Panc1 (cell line): ENCODE measurements at regions of chr1 and their contacts with region 1.

Region 1: GRCh38 chr1:40040511-40041465 is at the start of gene CAP1:
- DNase-seq: peak; percentile 89
- ATAC-seq: peak; percentile 97
- H3K4me3 ChIP-seq: peak within 1 kb of the TSS; percentile 96 to 100
- H3K27ac ChIP-seq: peak within 1 kb of the TSS; percentile 98
- H3K4me1 ChIP-seq: peaks cover 20% of the 10 kb centered on the region
- H3K27me3 ChIP-seq: no peaks in the 10 kb centered on the region
- CTCF ChIP-seq: no peak
- total RNA-seq, gene CAP1: 463 TPM

Region 2: DNA sequence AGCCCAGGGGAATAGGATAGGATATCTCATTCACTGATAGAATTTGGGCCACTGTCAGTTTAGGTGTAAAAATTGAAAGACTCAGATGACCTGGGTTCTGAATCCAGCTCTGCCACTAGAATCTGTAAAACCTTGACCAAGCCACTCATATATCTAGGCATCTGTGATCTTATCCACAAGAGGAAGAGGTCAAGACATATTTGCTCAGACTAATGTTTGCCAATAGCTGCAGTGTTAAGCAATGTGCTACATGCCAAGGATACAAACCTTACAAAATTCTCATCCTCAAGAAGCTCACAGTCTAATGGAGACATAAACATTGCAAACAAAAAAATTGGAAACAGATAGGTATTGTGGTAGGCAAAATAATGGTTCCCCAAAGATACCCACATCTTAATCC is 1398.4 kb before region 1 on chr1:
- CTCF ChIA-PET with region 1: no interaction called
- POLR2A ChIA-PET with region 1: interaction called, 13 read pairs
- in situ Hi-C with region 1: no loop called
- intact Hi-C with region 1: no loop called
- DNase-seq: no peak
- ATAC-seq: no peak
- H3K4me3 ChIP-seq: no peak overlapping the region
- H3K27ac ChIP-seq: no peak overlapping the region
- H3K4me1 ChIP-seq: no peaks in the 10 kb centered on the region
- H3K27me3 ChIP-seq: peaks cover 2% of the 10 kb centered on the region; the same call in 1 of the 2 replicates
- CTCF ChIP-seq: no peak